B cell (primary cell): ENCODE measurements at regions of chr18 and their contacts with region 1.

Region 1: DNA sequence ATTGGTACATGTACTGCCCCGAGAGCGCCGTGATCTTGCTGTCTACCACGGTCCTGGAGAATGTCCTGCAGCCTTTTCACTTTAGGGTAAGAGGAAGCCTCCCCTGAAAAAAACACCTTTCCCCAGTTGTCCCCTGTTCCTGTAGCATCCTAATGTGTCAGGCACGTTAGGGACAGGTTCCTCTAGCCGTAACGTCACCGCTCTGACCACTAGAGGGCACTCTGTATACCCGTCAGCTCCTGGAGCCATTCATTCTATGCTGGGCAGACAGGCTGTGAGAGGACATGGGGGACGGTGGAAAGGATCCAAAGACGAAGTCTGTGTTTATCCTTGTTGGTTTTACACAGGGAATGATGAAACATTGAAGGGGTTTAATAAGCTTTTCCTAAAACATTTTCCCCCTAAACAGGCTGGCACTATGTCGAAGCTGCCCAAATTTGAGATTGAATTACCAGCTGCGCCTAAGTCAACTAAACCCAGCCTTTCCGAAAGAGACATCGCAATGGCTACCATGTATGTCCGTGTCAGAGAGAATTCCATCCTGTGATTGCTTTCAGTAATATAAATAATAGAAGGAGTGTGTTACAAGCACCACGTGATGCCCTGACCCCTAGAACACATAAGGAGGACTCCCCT is 12.7 kb downstream of the RMC1 start:
- DNase-seq: peak; percentile 82
- ATAC-seq: peak; percentile 97
- H3K4me3 ChIP-seq: no peak overlapping the region
- H3K4me3 Mint-ChIP-seq: no peak overlapping the region
- H3K27ac ChIP-seq: peak overlapping the region in 1 of 2 donors; percentile 57
- H3K27ac Mint-ChIP-seq: peak overlapping the region; percentile 46
- H3K4me1 ChIP-seq: peaks cover 9 to 12% of the 10 kb centered on the region in 2 donors
- H3K4me1 Mint-ChIP-seq: peaks cover 22% of the 10 kb centered on the region
- H3K27me3 ChIP-seq: no peaks in the 10 kb centered on the region
- H3K27me3 Mint-ChIP-seq: no peaks in the 10 kb centered on the region
- CTCF ChIP-seq: peak; percentile 92

Region 2: DNA sequence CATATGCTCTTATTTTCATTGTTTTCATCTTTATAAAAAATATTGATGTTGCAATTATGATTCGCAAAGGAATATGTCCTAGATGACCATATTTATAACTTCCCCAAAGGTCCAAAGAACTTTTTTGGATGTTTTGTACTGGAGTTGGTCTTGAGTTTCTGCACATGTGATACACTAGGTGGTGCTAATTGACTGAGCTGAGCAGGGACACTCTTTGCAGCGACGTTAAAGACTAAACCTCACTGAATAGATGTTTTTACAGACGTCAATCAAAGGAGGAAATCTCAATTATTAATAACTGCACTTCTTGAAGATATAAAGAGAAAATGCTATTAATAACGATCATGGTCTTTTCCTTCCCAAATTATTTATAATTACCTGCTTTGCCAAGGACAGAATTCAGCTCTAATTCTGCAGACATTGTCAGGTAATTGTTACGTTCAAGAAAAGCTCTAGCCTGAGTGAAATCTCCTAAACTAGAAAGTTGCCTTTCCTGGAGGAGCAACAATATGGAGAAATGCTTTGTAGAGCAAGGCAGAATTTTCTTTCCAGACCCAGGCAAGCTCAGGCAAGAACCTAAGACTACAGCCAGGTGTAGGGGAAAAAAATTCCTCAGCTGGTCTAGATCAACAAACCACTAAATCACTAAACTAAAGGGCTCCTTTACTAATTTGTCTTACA is 702.2 kb before region 1 on chr18:
- CTCF ChIA-PET with region 1: no interaction called
- POLR2A ChIA-PET with region 1: no interaction called
- intact Hi-C with region 1: loop called (anchors 5 kb)
- DNase-seq: peak; percentile 44
- ATAC-seq: no peak
- H3K4me3 ChIP-seq: no peak overlapping the region
- H3K4me3 Mint-ChIP-seq: no peak overlapping the region
- H3K27ac ChIP-seq: no peak overlapping the region
- H3K27ac Mint-ChIP-seq: no peak overlapping the region
- H3K4me1 ChIP-seq: no peaks in the 10 kb centered on the region
- H3K4me1 Mint-ChIP-seq: no peaks in the 10 kb centered on the region
- H3K27me3 ChIP-seq: no peaks in the 10 kb centered on the region
- H3K27me3 Mint-ChIP-seq: peaks cover 16% of the 10 kb centered on the region
- CTCF ChIP-seq: peak; percentile 61

Region 3: GRCh38 chr18:23194155-23194996 is 321.7 kb before region 1 on chr18:
- CTCF ChIA-PET with region 1: no interaction called
- POLR2A ChIA-PET with region 1: no interaction called
- intact Hi-C with region 1: no loop called
- DNase-seq: no peak
- ATAC-seq: no peak
- H3K4me3 ChIP-seq: no peak overlapping the region
- H3K4me3 Mint-ChIP-seq: no peak overlapping the region
- H3K27ac ChIP-seq: no peak overlapping the region
- H3K27ac Mint-ChIP-seq: no peak overlapping the region
- H3K4me1 ChIP-seq: no peaks in the 10 kb centered on the region
- H3K4me1 Mint-ChIP-seq: peaks cover 4% of the 10 kb centered on the region
- H3K27me3 ChIP-seq: no peaks in the 10 kb centered on the region
- H3K27me3 Mint-ChIP-seq: peaks cover 8% of the 10 kb centered on the region
- CTCF ChIP-seq: no peak

Region 4: GRCh38 chr18:23526511-23527063 is 10.6 kb after region 1 on chr18:
- CTCF ChIA-PET with region 1: interaction called, 14 read pairs
- POLR2A ChIA-PET with region 1: no interaction called
- intact Hi-C with region 1: no loop called
- DNase-seq: no peak
- ATAC-seq: no peak
- H3K4me3 ChIP-seq: no peak overlapping the region
- H3K4me3 Mint-ChIP-seq: no peak overlapping the region
- H3K27ac ChIP-seq: no peak overlapping the region
- H3K27ac Mint-ChIP-seq: no peak overlapping the region
- H3K4me1 ChIP-seq: peaks cover 0 to 6% of the 10 kb centered on the region in 2 donors
- H3K4me1 Mint-ChIP-seq: peaks cover 10% of the 10 kb centered on the region
- H3K27me3 ChIP-seq: no peaks in the 10 kb centered on the region
- H3K27me3 Mint-ChIP-seq: no peaks in the 10 kb centered on the region
- CTCF ChIP-seq: no peak

Region 5: DNA sequence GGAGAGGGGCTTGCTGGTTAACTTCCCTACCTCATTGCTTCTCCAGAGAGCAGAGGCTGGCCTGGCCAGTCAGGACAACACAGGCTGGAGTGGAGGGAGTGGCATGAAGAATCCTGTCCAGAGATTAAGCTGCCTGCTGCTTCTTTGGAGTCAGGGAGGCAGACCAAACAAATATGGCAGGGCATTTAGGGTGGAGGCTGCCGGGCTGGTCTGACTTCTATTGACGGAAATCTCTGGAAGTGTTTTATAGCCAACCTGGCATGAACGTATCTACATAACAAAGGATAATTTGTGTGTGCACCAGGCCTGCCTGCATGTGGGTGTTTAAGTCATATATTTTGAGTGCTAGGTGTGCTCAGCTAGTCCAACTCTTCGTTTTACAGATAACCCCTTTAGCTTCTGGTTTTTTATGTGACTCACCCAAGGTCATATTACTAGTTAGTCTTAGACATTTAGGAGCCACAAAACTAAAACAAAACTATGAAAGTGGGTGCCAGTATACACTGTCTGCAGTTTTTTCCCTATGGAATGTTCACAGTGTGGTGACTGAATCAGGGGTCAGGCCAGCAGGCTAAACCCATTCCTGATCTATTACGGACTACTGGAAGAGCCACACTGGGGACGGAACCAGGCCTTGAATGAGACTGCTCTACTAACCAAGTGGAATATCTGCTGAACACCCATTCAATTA is 64.8 kb after region 1 on chr18:
- CTCF ChIA-PET with region 1: interaction called, 56 read pairs
- POLR2A ChIA-PET with region 1: no interaction called
- intact Hi-C with region 1: loop called (anchors 1 kb)
- DNase-seq: no peak
- ATAC-seq: no peak
- H3K4me3 ChIP-seq: no peak overlapping the region
- H3K4me3 Mint-ChIP-seq: no peak overlapping the region
- H3K27ac ChIP-seq: no peak overlapping the region
- H3K27ac Mint-ChIP-seq: no peak overlapping the region
- H3K4me1 ChIP-seq: peaks cover 8 to 13% of the 10 kb centered on the region in 2 donors
- H3K4me1 Mint-ChIP-seq: peaks cover 28% of the 10 kb centered on the region
- H3K27me3 ChIP-seq: no peaks in the 10 kb centered on the region
- H3K27me3 Mint-ChIP-seq: no peaks in the 10 kb centered on the region
- CTCF ChIP-seq: no peak